Heart left ventricle (tissue), 16 donors: ENCODE measurements at regions of chr15 and their contacts with region 1.

Region 1: DNA sequence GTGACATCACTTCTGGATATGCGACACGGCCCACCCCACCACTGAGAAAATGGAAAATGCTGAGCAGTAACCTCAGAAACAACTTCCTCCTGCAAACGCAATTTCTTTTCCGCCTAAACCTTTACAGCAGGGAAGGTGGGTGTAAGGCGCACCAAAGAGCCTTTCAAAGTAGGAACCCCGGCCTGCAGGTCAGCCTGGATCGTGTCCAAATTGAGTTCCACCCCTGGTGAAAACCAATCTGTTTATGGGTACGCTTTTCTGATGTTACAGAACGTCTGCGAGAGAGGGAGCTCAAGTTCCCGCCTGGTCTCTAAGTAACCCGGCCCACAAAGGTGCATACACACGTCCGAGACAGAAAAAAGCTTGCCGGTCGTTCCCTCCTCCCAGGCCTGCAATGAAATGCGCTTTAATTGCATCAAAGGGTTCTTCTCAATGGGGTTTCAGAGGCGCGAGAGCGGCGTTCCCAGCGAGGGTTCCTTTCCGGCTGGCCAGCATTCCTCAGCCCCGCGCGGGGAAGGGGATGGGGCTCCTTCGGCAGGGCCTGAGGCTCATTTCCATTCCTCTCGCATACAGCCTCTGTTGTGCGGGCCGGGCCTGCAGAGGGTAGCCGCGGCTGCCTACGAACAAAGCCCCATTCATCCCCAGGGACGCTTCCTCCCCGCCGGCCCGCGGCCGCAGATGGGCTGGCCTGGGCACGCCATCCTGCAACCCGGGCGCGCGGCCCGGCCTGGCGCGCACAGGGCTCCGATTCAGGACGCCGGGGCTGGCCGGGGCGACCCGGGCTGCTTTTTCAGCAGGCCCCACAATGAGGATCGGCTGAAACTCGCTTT is 138.1 kb downstream of the TMCO5A start:
- DNase-seq: peak; percentile 73 to 87 (median 76)
- ATAC-seq: peak; percentile 74 to 94 (median 90)
- H3K4me3 ChIP-seq: peak overlapping the region; percentile 18 to 88 (median 64)
- H3K27ac ChIP-seq: peak overlapping the region; percentile 74 to 95 (median 90)
- H3K4me1 ChIP-seq: peaks cover 0 to 58% (median 27%) of the 10 kb centered on the region in 12 donors
- H3K27me3 ChIP-seq: no peaks in the 10 kb centered on the region
- CTCF ChIP-seq: peak in 7 of 12 donors; percentile 9 to 39 (median 23)
- POLR2A ChIP-seq: no peak

Region 2: DNA sequence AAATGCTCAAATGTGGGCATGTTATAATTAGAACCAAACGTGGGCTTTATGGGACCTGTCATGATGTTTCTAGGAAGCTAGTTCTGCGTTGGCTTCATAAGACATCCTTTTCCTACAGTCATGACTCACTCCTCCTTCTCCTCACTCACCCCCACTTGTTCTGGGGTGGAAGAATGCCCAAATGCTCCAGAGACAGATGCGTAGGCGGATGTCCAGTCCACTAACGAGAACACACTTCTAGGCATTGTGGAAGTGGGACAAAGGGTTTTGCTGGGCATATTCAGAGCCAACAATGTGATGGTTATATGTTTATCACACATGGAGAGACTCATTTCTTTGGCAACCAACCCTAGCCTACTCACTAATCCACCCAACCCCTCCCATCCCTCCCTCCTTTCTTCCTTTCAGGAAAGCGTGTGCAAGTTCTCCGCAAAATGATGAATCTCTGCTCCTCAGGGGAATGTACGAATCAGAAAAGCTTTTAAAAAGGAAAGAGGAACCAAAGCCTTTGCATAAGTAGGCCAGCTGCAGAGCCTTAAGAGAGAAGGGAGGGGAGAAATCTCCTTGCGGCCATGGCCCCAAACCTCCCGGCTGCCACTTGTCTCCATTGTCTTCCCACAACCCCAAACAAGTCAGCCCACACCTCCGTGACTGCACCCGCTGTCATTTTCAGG is 57.1 kb after region 1 on chr15:
- intact Hi-C with region 1: loop called in 2 of 10 experiments (anchors 5 kb)
- DNase-seq: peak in 4 of 5 donors; percentile 72 to 86 (median 76)
- ATAC-seq: peak; percentile 75 to 89 (median 85)
- H3K4me3 ChIP-seq: peak overlapping the region in 9 of 12 donors; percentile 15 to 45 (median 26)
- H3K27ac ChIP-seq: peak overlapping the region; percentile 20 to 94 (median 79)
- H3K4me1 ChIP-seq: peaks cover 0 to 63% (median 17%) of the 10 kb centered on the region in 12 donors
- H3K27me3 ChIP-seq: no peaks in the 10 kb centered on the region
- CTCF ChIP-seq: no peak
- POLR2A ChIP-seq: peak in 1 of 2 donors; percentile 20

Region 3: GRCh38 chr15:38207621-38208020 is 135.1 kb after region 1 on chr15:
- intact Hi-C with region 1: loop called in 2 of 10 experiments (anchors 5 to 10 kb)
- DNase-seq: no peak
- ATAC-seq: no peak
- H3K4me3 ChIP-seq: no peak overlapping the region
- H3K27ac ChIP-seq: peak overlapping the region in 1 of 12 donors; percentile 4
- H3K4me1 ChIP-seq: peaks cover 0 to 37% (median 17%) of the 10 kb centered on the region in 12 donors
- H3K27me3 ChIP-seq: no peaks in the 10 kb centered on the region
- CTCF ChIP-seq: no peak
- POLR2A ChIP-seq: no peak

Region 4: GRCh38 chr15:38217191-38217595 is 144.6 kb after region 1 on chr15:
- intact Hi-C with region 1: loop called in 1 of 10 experiments (anchors 10 kb)
- DNase-seq: no peak
- ATAC-seq: no peak
- H3K4me3 ChIP-seq: no peak overlapping the region
- H3K27ac ChIP-seq: no peak overlapping the region
- H3K4me1 ChIP-seq: peaks cover 0 to 34% (median 11%) of the 10 kb centered on the region in 12 donors
- H3K27me3 ChIP-seq: no peaks in the 10 kb centered on the region
- CTCF ChIP-seq: no peak
- POLR2A ChIP-seq: no peak

Region 5: GRCh38 chr15:38354315-38354929 is 281.9 kb after region 1 on chr15:
- intact Hi-C with region 1: loop called in 5 of 10 experiments (anchors 5 to 10 kb)
- DNase-seq: peak in 4 of 5 donors; percentile 43 to 61 (median 58)
- ATAC-seq: peak; percentile 37 to 72 (median 61)
- H3K4me3 ChIP-seq: no peak overlapping the region
- H3K27ac ChIP-seq: no peak overlapping the region
- H3K4me1 ChIP-seq: peaks cover 0 to 11% (median 0%) of the 10 kb centered on the region in 12 donors
- H3K27me3 ChIP-seq: no peaks in the 10 kb centered on the region
- CTCF ChIP-seq: peak; percentile 66 to 92 (median 81)
- POLR2A ChIP-seq: no peak

Region 6: DNA sequence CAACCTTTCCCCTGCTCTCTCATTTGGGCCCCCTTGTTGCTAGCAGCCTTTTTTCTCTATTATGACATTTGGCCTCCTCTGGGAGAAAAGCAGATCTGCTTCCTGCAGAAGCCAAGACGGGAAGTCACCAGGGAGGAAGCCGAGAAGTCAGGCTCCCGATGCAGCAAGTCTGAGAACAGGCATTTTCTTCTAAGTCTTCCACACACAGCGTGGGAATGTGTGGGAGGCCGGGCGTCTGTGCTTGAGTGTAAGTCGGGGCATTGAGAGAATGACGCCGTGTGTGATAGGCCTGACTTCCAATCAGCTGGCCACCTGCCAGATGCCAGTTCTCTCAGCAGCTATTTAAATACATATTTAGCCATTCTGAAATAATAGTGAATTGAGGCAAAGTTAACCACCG is 305.6 kb after region 1 on chr15:
- intact Hi-C with region 1: loop called in 1 of 10 experiments (anchors 10 kb)
- DNase-seq: peak; percentile 76 to 84 (median 80)
- ATAC-seq: peak; percentile 47 to 86 (median 79)
- H3K4me3 ChIP-seq: peak overlapping the region in 1 of 12 donors; percentile 1
- H3K27ac ChIP-seq: peak overlapping the region in 11 of 12 donors; percentile 22 to 84 (median 59)
- H3K4me1 ChIP-seq: peaks cover 0 to 54% (median 41%) of the 10 kb centered on the region in 12 donors
- H3K27me3 ChIP-seq: no peaks in the 10 kb centered on the region
- CTCF ChIP-seq: no peak
- POLR2A ChIP-seq: no peak